Sciatic nerve (tissue), 2 donors: ENCODE measurements at regions of chr14 and their contacts with region 1.

Region 1: DNA sequence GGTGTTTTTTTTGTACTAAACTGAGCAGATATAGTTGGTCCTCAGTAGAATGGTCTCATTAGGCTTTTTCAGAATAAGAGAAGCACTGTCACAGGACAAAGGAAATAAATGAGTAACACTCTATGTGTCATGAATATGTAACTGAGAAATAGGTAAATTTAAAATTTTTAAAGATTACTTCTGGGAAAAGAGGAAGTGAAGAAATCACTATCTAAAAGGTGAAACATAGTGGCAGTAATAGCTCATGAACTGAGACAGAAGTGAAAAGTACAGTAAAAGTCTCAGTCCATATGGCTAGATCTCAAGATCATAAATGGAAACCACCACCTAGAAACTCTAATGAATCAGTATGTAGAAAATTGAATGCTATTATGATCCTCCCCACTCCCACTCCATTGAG is 89.3 kb upstream of the TTC7B start:
- DNase-seq: no peak
- ATAC-seq: no peak

Region 2: DNA sequence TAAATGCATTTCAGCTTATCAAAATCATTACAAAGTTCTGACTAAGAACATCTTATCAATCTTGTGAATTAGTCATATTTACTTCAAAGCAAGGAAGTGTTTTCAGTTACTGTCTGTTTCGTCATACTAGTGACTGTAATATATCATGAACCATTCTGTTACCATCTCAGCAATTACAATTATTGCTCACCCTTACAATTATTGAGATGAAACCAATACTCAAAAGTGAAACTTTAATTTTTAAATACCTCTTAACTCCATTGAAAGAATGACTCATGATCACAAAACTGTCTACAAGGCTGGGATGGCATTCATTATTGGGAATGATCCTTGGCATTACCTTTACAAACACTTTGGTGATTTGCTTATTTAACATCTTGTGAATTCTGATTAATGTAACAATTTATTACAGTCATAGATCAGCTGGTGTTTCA is 64.7 kb after region 1 on chr14:
- intact Hi-C with region 1: no loop called
- DNase-seq: no peak
- ATAC-seq: no peak

Region 3: DNA sequence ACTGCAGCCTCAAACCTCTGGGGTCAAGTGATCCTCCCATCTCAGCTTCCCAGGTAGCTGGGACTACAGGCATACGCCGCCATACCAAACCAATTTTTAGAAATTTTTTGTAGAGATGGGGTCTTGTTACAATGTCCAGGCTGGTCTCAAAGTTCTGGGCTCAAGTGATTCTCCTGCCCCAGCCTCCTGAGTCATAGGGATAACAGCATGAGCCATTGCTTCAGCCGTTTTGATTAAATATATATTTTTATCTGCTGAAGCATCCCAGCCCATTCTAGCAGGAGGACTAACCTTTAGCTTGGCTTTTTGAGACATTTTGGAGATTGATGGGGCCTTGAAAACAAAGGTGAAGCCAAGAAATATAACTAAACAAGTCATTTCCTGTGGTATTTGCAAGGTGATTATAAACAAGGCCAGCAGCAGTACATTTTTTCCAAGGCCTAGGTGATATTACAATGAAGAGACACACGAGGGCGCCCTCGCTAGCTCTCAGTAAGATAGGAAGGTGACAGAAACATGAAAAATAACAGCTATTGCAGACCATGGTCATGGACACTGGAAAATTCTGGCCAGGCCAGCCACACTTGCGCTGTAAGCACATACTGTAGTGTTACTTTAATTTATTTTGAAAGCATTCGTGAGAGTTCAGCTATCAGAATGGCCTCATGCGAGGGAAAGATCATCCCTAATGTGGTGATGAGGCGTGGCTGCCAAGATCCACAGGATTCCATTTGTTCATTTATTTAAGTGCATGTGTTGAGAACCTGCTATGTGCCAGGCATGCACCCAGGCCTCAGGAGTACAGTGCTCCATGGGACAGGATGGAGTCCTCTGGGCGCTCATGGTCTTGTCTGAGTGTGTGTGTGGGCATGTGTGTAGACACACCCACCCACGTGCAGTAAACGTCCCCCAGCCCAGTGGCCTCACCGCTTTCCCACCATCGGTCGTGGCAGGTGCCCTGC is 271.8 kb after region 1 on chr14:
- intact Hi-C with region 1: loop called (anchors 5 kb)
- DNase-seq: no peak
- ATAC-seq: peak; percentile 59

Region 4: GRCh38 chr14:91573893-91574837 is 668.6 kb after region 1 on chr14:
- intact Hi-C with region 1: loop called (anchors 5 kb)
- DNase-seq: peak; percentile 60
- ATAC-seq: peak; percentile 26